T-cell (primary cell): ENCODE measurements at regions of chr4 and their contacts with region 1.

Region 1: GRCh38 chr4:87093443-87094123 is 126.8 kb downstream of the KLHL8 start:
- DNase-seq: peak in 31 of 35 experiments; percentile 10 to 68 (median 32)
- ATAC-seq: peak; percentile 79 to 86 (median 82)
- H3K4me3 ChIP-seq: no peak overlapping the region
- H3K4me3 Mint-ChIP-seq: no peak overlapping the region
- H3K27ac ChIP-seq: no peak overlapping the region
- H3K27ac Mint-ChIP-seq: peak overlapping the region; percentile 82 to 84
- H3K4me1 ChIP-seq: no peaks in the 10 kb centered on the region
- H3K4me1 Mint-ChIP-seq: peaks cover 36 to 52% (median 46%) of the 10 kb centered on the region in 3 donors
- H3K27me3 ChIP-seq: no peaks in the 10 kb centered on the region
- H3K27me3 Mint-ChIP-seq: no peaks in the 10 kb centered on the region

Region 2: DNA sequence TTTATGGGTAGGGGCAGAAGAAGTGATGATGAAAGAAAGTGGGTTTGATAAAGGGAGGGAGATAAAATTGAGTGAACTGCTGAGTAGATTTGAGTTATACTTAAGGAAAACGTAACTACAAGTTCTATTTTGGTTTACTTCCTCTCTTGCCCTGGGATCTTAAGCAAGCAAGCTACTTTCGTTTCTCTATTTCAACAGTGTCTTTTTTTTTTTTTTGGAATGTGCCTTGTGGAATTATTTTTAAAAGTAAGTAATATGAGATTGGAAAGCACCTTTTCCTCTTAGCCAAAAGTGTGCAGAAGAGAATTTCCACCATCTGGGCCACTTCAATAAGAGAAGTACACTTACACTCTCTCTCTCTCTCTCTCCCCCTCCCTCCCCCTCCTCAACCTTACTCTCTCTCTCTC is 185.3 kb before region 1 on chr4:
- CTCF ChIA-PET with region 1: interaction called in 1 of 2 experiments, 3 read pairs
- POLR2A ChIA-PET with region 1: interaction called in 1 of 2 experiments, 10 read pairs
- DNase-seq: peak in 1 of 35 experiments; percentile 4
- ATAC-seq: no peak
- H3K4me3 ChIP-seq: no peak overlapping the region
- H3K4me3 Mint-ChIP-seq: peak overlapping the region; percentile 53 to 69 (median 61)
- H3K27ac ChIP-seq: no peak overlapping the region
- H3K27ac Mint-ChIP-seq: peak overlapping the region; percentile 13 to 58
- H3K4me1 ChIP-seq: peaks cover 4 to 10% of the 10 kb centered on the region in 2 experiments
- H3K4me1 Mint-ChIP-seq: peaks cover 20 to 33% (median 23%) of the 10 kb centered on the region in 3 donors
- H3K27me3 ChIP-seq: peaks cover 0 to 14% of the 10 kb centered on the region in 2 experiments
- H3K27me3 Mint-ChIP-seq: peaks cover 3 to 10% of the 10 kb centered on the region in 2 donors

Region 3: GRCh38 chr4:86927843-86928395 is 165.7 kb before region 1 on chr4:
- CTCF ChIA-PET with region 1: interaction called, 154 to 179 read pairs
- POLR2A ChIA-PET with region 1: interaction called in 1 of 2 experiments, 5 read pairs
- DNase-seq: no peak
- ATAC-seq: no peak
- H3K4me3 ChIP-seq: no peak overlapping the region
- H3K4me3 Mint-ChIP-seq: no peak overlapping the region
- H3K27ac ChIP-seq: no peak overlapping the region
- H3K27ac Mint-ChIP-seq: no peak overlapping the region
- H3K4me1 ChIP-seq: no peaks in the 10 kb centered on the region
- H3K4me1 Mint-ChIP-seq: peaks cover 0 to 11% (median 0%) of the 10 kb centered on the region in 3 donors
- H3K27me3 ChIP-seq: no peaks in the 10 kb centered on the region
- H3K27me3 Mint-ChIP-seq: no peaks in the 10 kb centered on the region

Region 4: GRCh38 chr4:86934771-86935565 is 158.6 kb before region 1 on chr4 and contains the start of gene AFF1:
- CTCF ChIA-PET with region 1: interaction called, 5 to 21 read pairs
- POLR2A ChIA-PET with region 1: interaction called in 1 of 2 experiments, 3 read pairs
- DNase-seq: peak; percentile 70 to 96 (median 82)
- ATAC-seq: peak; percentile 77 to 84 (median 80)
- H3K4me3 ChIP-seq: peak within 1 kb of the TSS; percentile 75 to 96
- H3K4me3 Mint-ChIP-seq: peak within 1 kb of the TSS; percentile 84 to 92 (median 87)
- H3K27ac ChIP-seq: peak within 1 kb of the TSS; percentile 82
- H3K27ac Mint-ChIP-seq: peak within 1 kb of the TSS; percentile 96 to 98
- H3K4me1 ChIP-seq: peaks cover 30 to 31% of the 10 kb centered on the region in 2 experiments
- H3K4me1 Mint-ChIP-seq: peaks cover 48 to 54% (median 53%) of the 10 kb centered on the region in 3 donors
- H3K27me3 ChIP-seq: no peaks in the 10 kb centered on the region
- H3K27me3 Mint-ChIP-seq: no peaks in the 10 kb centered on the region
- total RNA-seq, gene AFF1: 65.3 to 112 (median 93.4) TPM

Region 5: GRCh38 chr4:87103691-87104187 is 10.2 kb after region 1 on chr4:
- CTCF ChIA-PET with region 1: interaction called, 3 to 11 read pairs
- POLR2A ChIA-PET with region 1: no interaction called
- DNase-seq: peak in 3 of 35 experiments; percentile 6 to 63 (median 6)
- ATAC-seq: peak; percentile 72 to 85 (median 82)
- H3K4me3 ChIP-seq: no peak overlapping the region
- H3K4me3 Mint-ChIP-seq: peak overlapping the region; percentile 56 to 66 (median 61)
- H3K27ac ChIP-seq: peak overlapping the region; percentile 78
- H3K27ac Mint-ChIP-seq: peak overlapping the region; percentile 97
- H3K4me1 ChIP-seq: peaks cover 7 to 15% of the 10 kb centered on the region in 2 experiments
- H3K4me1 Mint-ChIP-seq: peaks cover 57 to 76% (median 76%) of the 10 kb centered on the region in 3 donors
- H3K27me3 ChIP-seq: no peaks in the 10 kb centered on the region
- H3K27me3 Mint-ChIP-seq: no peaks in the 10 kb centered on the region